GM13977 (cell line): ENCODE measurements at regions of chr1 and their contacts with region 1.

Region 1: DNA sequence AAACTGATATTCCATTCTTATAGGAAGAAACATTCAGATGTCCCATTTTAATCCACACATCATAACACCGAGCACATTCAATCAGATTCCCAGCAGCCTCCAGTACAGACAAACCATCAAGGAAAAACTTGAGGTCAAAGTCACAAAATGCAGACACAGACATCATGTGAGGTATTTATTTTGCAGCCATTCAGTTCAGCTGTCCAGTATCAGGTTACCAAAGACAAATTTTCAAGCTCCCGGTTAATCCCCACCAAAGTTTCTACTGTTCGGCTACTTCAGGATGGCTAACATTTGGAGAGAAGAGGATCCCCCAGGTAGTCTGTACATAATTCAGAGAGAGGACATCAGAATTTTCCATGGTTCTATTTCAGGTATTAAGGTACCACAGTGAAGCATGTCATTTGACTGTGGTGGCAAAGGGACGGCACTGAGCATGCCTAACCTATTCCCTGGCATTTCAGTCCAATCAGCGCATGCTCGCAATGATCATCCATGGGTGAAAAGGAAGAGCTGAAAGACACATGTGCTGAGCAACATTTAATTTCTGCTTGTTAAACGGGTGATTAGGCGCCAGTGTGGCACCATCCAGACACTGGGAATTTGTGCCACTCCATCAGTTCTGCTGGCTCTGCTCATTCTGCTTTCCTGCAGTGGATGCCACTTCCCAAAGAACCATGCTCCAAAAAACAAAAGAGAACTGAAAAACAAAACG is 13.6 kb upstream of the NDC1 start:
- DNase-seq: no peak
- CTCF ChIP-seq: no peak

Region 2: DNA sequence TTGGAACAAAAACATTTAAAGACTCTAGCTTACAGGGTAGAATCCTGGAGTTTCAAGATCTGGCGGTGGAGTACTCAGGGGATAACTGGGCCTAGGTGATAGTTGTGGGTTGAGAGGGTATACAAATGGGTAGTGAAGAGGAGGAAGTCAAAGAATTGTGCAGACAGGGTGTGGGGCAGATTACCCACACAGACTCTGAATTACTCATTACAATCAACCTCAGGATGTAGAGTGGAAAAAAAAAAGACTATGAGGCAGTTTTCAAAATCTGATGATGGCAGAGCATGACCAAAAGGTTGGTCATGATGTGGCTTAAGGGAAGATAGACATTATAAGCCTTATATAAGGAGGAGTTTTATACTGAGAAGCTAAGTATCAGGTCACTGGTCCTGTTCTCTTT is 68.7 kb before region 1 on chr1:
- in situ Hi-C with region 1: no loop called
- DNase-seq: no peak
- CTCF ChIP-seq: no peak

Region 3: GRCh38 chr1:53959664-53960250 is 108.0 kb after region 1 on chr1:
- in situ Hi-C with region 1: loop called (anchors 10 kb)
- DNase-seq: peak; percentile 48
- CTCF ChIP-seq: peak; percentile 43